Right ventricle myocardium inferior (tissue), 1 donor: ENCODE measurements at regions of chr17 and their contacts with region 1.

Region 1: GRCh38 chr17:10729334-10730193 is at the start of gene TMEM220:
- DNase-seq: peak; percentile 90
- ATAC-seq: peak; percentile 98
- total RNA-seq, gene TMEM220: 9.8 TPM

Region 2: GRCh38 chr17:10598621-10599020 is 130.9 kb before region 1 on chr17:
- intact Hi-C with region 1: no loop called
- DNase-seq: no peak
- ATAC-seq: no peak

Region 3: GRCh38 chr17:10772425-10773380 is 43.1 kb after region 1 on chr17:
- intact Hi-C with region 1: no loop called
- DNase-seq: no peak
- ATAC-seq: no peak

Region 4: DNA sequence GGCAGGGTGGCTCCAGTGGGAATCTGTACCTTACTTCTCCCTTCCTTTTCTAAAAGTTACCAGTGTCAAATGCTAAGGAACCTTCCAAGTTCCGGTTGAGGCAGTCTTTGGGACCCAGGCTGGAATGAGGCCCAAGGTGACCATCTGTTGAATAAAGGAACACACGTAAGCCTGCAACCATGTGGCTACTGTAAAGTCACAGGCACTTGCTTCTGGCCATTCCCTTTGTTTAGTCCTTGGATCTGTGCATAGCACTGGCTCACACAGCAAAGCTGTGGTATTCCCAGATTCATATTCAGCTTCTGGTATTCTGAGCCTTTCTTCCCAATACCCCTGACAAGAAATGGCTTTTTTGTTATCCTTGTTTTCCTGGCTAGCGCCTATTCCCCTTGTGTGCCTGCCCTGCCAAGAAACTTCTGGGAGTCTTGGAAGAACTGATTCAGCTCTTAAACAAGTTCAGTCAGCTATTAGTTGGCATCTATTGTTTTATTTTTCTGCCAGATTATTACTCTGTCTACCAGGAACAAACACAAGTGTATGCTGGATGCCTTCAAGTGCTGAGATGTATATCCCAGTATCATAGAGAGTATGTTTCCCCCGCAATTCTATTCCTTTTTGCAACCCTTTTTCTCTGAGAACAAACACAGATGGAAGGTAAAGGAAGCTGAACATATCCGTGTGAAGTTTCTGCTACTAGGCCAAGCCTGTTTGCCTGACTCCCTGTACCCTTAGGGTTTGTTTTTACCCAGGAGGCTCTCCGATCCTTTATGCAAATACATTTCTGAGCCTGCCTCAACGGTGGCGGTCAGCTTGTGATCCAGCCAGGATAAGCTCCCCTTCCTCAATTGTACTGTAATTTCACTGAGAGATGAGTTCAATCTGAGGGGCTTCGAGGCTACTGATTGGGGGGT is 61.2 kb after region 1 on chr17:
- intact Hi-C with region 1: loop called (anchors 10 kb)
- DNase-seq: no peak
- ATAC-seq: peak; percentile 55

Region 5: DNA sequence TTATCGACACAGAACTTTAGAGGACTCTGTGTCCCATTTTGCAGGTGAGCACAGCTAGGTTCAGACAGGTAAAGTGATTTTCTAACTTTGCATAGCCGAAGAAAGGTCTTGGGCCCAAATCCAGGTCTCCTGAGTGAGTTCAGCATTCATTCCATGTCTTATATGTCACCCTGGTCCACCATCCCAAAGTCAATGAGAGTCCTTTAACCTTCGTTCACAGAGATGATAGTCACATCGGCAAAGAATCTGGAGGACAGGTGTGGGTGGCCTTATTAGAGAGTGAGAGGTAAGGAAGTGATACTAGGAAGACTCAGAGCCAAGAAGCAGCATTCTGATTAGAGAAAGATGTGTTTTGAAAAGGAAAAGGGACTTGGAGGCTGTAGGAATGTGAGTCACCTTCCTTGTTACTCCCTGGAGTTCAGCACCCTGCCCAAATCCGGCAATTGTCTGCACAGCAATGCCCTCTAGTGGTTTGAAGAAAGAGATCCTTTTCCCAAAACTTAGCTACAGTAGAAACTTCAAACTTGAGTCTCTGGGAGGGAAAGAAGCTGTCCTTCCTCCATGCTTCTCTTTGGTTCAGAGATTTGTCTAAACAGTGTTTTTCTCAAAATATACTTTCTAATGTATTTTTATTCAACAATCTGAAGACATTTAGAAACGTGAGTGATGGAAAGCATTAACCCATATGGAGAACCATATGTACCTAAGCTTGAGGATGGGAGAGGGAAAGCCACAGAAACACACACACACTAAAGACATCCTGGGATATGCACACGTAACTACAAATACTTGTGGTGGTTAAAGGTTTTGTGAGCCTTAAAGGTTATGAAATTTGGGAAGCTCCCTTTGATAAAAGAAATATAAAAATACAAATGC is 415.0 kb after region 1 on chr17:
- intact Hi-C with region 1: loop called (anchors 10 kb)
- DNase-seq: no peak
- ATAC-seq: no peak